HepG2 (cell line): ENCODE measurements at regions of chr18 and their contacts with region 1.

Region 1: GRCh38 chr18:12391618-12392165 is 14.7 kb upstream of the AFG3L2 start:
- DNase-seq: peak; percentile 51
- ATAC-seq: peak; percentile 65
- H3K4me3 ChIP-seq: no peak overlapping the region
- H3K27ac ChIP-seq: no peak overlapping the region
- H3K4me1 ChIP-seq: peaks cover 50% of the 10 kb centered on the region
- H3K27me3 ChIP-seq: no peaks in the 10 kb centered on the region
- CTCF ChIP-seq: peak; percentile 89
- EP300 ChIP-seq: no peak
- POLR2A ChIP-seq: no peak
- RAD21 ChIP-seq: peak; percentile 89

Region 2: GRCh38 chr18:12420831-12421421 is 29.2 kb after region 1 on chr18:
- CTCF ChIA-PET with region 1: interaction called, 5 read pairs
- POLR2A ChIA-PET with region 1: interaction called, 10 read pairs
- in situ Hi-C with region 1: no loop called
- intact Hi-C with region 1: loop called (anchors 2 kb)
- DNase-seq: peak; percentile 66
- ATAC-seq: peak; percentile 79
- H3K4me3 ChIP-seq: peak overlapping the region; percentile 76 to 87 (median 86)
- H3K27ac ChIP-seq: peak overlapping the region; percentile 92
- H3K4me1 ChIP-seq: peaks cover 52% of the 10 kb centered on the region
- H3K27me3 ChIP-seq: no peaks in the 10 kb centered on the region
- CTCF ChIP-seq: no peak; the same call in 1 of the 2 replicates
- EP300 ChIP-seq: no peak
- POLR2A ChIP-seq: peak; percentile 56 to 65
- RAD21 ChIP-seq: no peak

Region 3: DNA sequence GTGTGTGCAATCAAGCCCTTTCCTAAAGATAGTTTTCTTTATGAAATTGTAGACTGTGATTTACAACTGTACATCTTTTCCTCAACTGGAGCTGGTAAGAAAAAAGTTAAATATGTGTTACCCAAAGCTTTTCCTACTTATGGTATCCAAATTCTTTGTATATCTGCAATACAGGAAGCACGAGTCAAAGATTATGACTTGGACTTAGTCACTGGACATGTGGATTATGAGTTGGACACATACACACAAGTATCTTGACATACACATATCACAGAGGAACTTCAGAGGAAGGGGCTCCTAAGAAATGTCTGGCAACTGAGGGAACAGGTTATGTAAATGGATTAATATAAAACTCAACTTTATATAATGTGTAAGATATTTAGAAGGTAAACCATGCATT is 51.3 kb after region 1 on chr18:
- CTCF ChIA-PET with region 1: no interaction called
- POLR2A ChIA-PET with region 1: no interaction called
- in situ Hi-C with region 1: no loop called
- intact Hi-C with region 1: no loop called
- DNase-seq: no peak
- ATAC-seq: no peak
- H3K4me3 ChIP-seq: no peak overlapping the region
- H3K27ac ChIP-seq: no peak overlapping the region
- H3K4me1 ChIP-seq: no peaks in the 10 kb centered on the region
- H3K27me3 ChIP-seq: no peaks in the 10 kb centered on the region
- CTCF ChIP-seq: no peak
- EP300 ChIP-seq: no peak
- POLR2A ChIP-seq: no peak
- RAD21 ChIP-seq: no peak

Region 4: GRCh38 chr18:12460874-12461273 is 69.2 kb after region 1 on chr18:
- CTCF ChIA-PET with region 1: no interaction called
- POLR2A ChIA-PET with region 1: no interaction called
- in situ Hi-C with region 1: no loop called
- intact Hi-C with region 1: loop called (anchors 2 kb)
- DNase-seq: peak; percentile 67
- ATAC-seq: peak; percentile 100
- H3K4me3 ChIP-seq: peak overlapping the region in 1 of 3 experiments; percentile 4; a peak in 1 of 6 replicates
- H3K27ac ChIP-seq: peak overlapping the region; percentile 57
- H3K4me1 ChIP-seq: peaks cover 24% of the 10 kb centered on the region
- H3K27me3 ChIP-seq: no peaks in the 10 kb centered on the region
- CTCF ChIP-seq: no peak
- EP300 ChIP-seq: no peak
- POLR2A ChIP-seq: no peak
- RAD21 ChIP-seq: no peak

Region 5: DNA sequence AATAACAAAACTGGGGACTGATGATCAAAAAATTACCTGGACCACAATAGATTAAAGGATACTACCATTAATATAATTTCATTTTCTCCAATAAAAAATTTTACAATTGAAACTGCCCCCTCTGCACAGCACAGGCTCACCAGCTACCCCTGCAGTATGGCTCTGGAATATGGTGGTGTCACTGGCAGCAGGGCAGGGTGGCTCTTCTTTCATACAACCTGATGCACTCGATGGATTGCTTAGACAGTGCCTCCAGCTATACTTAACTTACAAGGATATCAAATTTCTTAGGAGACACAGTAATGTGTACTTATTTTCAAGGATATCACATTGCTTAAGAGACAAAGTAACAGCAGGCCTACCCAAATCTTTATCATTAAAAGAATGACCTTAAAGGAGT is 140.1 kb after region 1 on chr18:
- CTCF ChIA-PET with region 1: no interaction called
- POLR2A ChIA-PET with region 1: no interaction called
- in situ Hi-C with region 1: loop called (anchors 10 kb)
- intact Hi-C with region 1: loop called (anchors 10 kb)
- DNase-seq: no peak
- ATAC-seq: no peak
- H3K4me3 ChIP-seq: no peak overlapping the region
- H3K27ac ChIP-seq: no peak overlapping the region
- H3K4me1 ChIP-seq: peaks cover 11% of the 10 kb centered on the region
- H3K27me3 ChIP-seq: no peaks in the 10 kb centered on the region
- CTCF ChIP-seq: no peak
- EP300 ChIP-seq: no peak
- POLR2A ChIP-seq: no peak
- RAD21 ChIP-seq: no peak

Region 6: GRCh38 chr18:12657684-12658425 is 266.2 kb after region 1 on chr18 and contains the start of gene SPIRE1:
- CTCF ChIA-PET with region 1: interaction called, 55 read pairs
- POLR2A ChIA-PET with region 1: no interaction called
- in situ Hi-C with region 1: loop called (anchors 5 kb)
- intact Hi-C with region 1: loop called (anchors 1 kb)
- DNase-seq: peak; percentile 29
- ATAC-seq: peak; percentile 83
- H3K4me3 ChIP-seq: peak within 1 kb of the TSS; percentile 78 to 86 (median 85)
- H3K27ac ChIP-seq: peak within 1 kb of the TSS; percentile 23
- H3K4me1 ChIP-seq: peaks cover 21% of the 10 kb centered on the region
- H3K27me3 ChIP-seq: no peaks in the 10 kb centered on the region
- CTCF ChIP-seq: peak; percentile 38
- EP300 ChIP-seq: no peak
- POLR2A ChIP-seq: peak in 1 of 2 experiments; percentile 54; a peak in 2 of 4 replicates
- RAD21 ChIP-seq: no peak
- total RNA-seq, gene SPIRE1: 21.3 and 28.1 TPM in 2 replicates

Region 7: DNA sequence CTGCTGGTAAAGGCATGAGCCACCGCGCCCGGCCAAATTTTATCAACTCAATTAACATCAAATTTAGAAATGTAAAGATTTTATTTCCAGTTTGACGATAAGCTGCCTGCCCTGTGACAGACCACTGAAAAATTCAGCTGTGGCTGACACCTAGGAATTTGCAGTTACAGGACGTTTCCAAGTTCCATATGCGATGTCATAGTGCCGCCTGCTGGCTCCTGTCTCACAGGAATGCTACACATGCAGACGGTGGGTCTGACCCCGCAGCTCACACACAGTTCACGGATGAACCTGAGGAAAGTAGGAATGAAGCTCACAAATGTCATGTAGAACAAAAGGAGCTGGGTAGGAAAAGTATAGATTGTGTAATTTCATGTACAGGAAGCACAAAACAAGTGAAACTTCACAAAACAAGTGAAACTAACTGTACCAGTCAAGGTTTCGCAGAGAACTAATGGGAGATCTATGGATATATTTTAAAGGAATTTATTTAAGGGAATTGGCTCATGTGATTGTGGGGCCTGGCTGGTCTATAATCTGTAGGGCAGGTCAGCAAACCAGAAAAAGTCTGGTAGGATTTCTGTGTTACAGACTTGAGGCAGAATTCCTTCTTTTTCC is 542.9 kb after region 1 on chr18:
- CTCF ChIA-PET with region 1: no interaction called
- POLR2A ChIA-PET with region 1: no interaction called
- in situ Hi-C with region 1: loop called (anchors 25 kb)
- intact Hi-C with region 1: loop called (anchors 10 kb)
- DNase-seq: peak; percentile 82
- ATAC-seq: peak; percentile 94
- H3K4me3 ChIP-seq: no peak overlapping the region; a peak in 1 of 6 replicates
- H3K27ac ChIP-seq: no peak overlapping the region
- H3K4me1 ChIP-seq: peaks cover 57% of the 10 kb centered on the region
- H3K27me3 ChIP-seq: no peaks in the 10 kb centered on the region
- CTCF ChIP-seq: peak; percentile 97
- EP300 ChIP-seq: no peak
- POLR2A ChIP-seq: no peak
- RAD21 ChIP-seq: peak; percentile 94